Activated T-helper 1 cell treated with anti-CD3 and anti-CD28 coated beads, Interleukin-12 subunit alpha, Interleukin-12 subunit beta, Interleukin-2, Interleukin-4 antibody, amounts not matched to agents 30 ng/mL and 10 ng/mL and 1 ng/mL, durations not matched to agents 14 hours and 24 hours and 36 hours (primary cell): ENCODE measurements at regions of chr19 and their contacts with region 1.

Region 1: GRCh38 chr19:53792721-53793433 is 31.2 kb downstream of the NLRP12 start:
- DNase-seq: peak; percentile 69
- H3K4me3 Mint-ChIP-seq: no peak overlapping the region
- H3K27ac Mint-ChIP-seq: no peak overlapping the region
- H3K4me1 Mint-ChIP-seq: no peaks in the 10 kb centered on the region
- H3K27me3 Mint-ChIP-seq: no peaks in the 10 kb centered on the region

Region 2: GRCh38 chr19:53707277-53707676 is 85.6 kb before region 1 on chr19:
- intact Hi-C with region 1: no loop called
- DNase-seq: no peak
- H3K4me3 Mint-ChIP-seq: no peak overlapping the region
- H3K27ac Mint-ChIP-seq: no peak overlapping the region
- H3K4me1 Mint-ChIP-seq: no peaks in the 10 kb centered on the region
- H3K27me3 Mint-ChIP-seq: no peaks in the 10 kb centered on the region

Region 3: DNA sequence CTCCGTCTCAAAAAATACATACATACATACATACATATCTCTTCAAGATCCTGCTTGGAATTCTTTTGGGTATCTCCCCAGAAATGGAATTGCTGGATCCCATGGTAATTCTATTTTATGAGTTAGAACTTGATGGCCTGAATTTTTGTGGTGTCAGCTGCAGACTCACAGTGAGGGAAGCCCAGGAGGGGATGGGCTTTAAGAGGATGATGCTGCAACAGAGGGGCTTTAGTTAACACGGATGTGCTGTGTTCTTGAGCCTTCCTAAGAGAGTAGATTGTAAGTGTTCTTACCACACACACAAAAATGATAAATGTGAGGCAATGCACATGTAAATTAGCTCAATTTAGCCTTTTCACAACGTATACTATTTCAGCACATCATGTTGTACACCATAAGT is 230.3 kb after region 1 on chr19:
- intact Hi-C with region 1: loop called (anchors 1 kb)
- DNase-seq: no peak
- H3K4me3 Mint-ChIP-seq: no peak overlapping the region
- H3K27ac Mint-ChIP-seq: no peak overlapping the region
- H3K4me1 Mint-ChIP-seq: no peaks in the 10 kb centered on the region
- H3K27me3 Mint-ChIP-seq: no peaks in the 10 kb centered on the region

Region 4: DNA sequence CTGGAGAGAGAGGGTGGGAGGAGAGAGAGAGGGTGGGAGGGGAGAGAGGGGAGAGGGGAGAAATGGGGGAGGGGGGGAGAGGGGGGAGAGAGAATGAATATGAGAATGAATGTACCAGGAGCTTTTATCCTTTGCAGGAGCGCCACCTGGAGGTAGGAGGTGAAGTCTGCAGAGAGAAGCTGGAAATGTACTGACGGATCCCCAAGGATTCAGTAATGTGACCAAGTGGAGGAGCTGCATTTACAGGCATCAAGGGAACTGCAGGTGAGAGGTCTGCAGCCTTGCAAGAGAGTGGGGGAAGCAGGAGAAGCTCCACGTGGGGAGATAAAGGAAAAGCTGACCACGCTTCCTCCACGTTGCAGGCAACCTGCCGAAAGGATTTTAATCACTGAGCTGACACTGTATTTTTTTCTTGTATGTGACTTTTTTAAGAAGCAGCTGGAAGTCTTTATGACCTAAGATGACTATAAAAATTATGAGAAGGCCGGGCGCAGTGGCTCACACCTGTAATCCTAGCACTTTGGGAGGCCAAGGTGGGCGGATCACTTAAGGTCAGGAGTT is 237.1 kb after region 1 on chr19:
- intact Hi-C with region 1: loop called (anchors 1 kb)
- DNase-seq: peak; percentile 12
- H3K4me3 Mint-ChIP-seq: no peak overlapping the region
- H3K27ac Mint-ChIP-seq: no peak overlapping the region
- H3K4me1 Mint-ChIP-seq: no peaks in the 10 kb centered on the region
- H3K27me3 Mint-ChIP-seq: peaks cover 2% of the 10 kb centered on the region